CD4-positive, alpha-beta T cell (primary cell): ENCODE measurements at regions of chr10 and their contacts with region 1.

Region 1: GRCh38 chr10:102641880-102642735 is 2.2 kb upstream of the TRIM8 start:
- DNase-seq: peak; percentile 94 to 100 (median 98)
- ATAC-seq: peak; percentile 70
- H3K4me3 ChIP-seq: peak overlapping the region; percentile 75
- H3K4me3 Mint-ChIP-seq: peak overlapping the region; percentile 96
- H3K27ac ChIP-seq: peak overlapping the region; percentile 95 to 96
- H3K27ac Mint-ChIP-seq: peak overlapping the region; percentile 95
- H3K4me1 ChIP-seq: peaks cover 28% of the 10 kb centered on the region
- H3K4me1 Mint-ChIP-seq: peaks cover 31% of the 10 kb centered on the region
- H3K27me3 ChIP-seq: no peaks in the 10 kb centered on the region
- H3K27me3 Mint-ChIP-seq: no peaks in the 10 kb centered on the region
- CTCF ChIP-seq: no peak

Region 2: GRCh38 chr10:102611514-102612087 is 30.5 kb before region 1 on chr10:
- CTCF ChIA-PET with region 1: interaction called, 16 read pairs
- POLR2A ChIA-PET with region 1: interaction called, 17 read pairs
- intact Hi-C with region 1: loop called in 1 of 2 experiments (anchors 2 kb)
- DNase-seq: no peak
- ATAC-seq: no peak
- H3K4me3 ChIP-seq: no peak overlapping the region
- H3K4me3 Mint-ChIP-seq: peak overlapping the region; percentile 8
- H3K27ac ChIP-seq: peak overlapping the region; percentile 45 to 88
- H3K27ac Mint-ChIP-seq: peak overlapping the region; percentile 99
- H3K4me1 ChIP-seq: peaks cover 44% of the 10 kb centered on the region
- H3K4me1 Mint-ChIP-seq: peaks cover 35% of the 10 kb centered on the region
- H3K27me3 ChIP-seq: no peaks in the 10 kb centered on the region
- H3K27me3 Mint-ChIP-seq: no peaks in the 10 kb centered on the region
- CTCF ChIP-seq: no peak

Region 3: GRCh38 chr10:102660888-102661657 is 19.0 kb after region 1 on chr10:
- CTCF ChIA-PET with region 1: interaction called, 12 read pairs
- POLR2A ChIA-PET with region 1: interaction called, 121 read pairs
- intact Hi-C with region 1: no loop called
- DNase-seq: peak in 13 of 14 experiments; percentile 33 to 81 (median 46)
- ATAC-seq: peak; percentile 74
- H3K4me3 ChIP-seq: peak overlapping the region; percentile 45
- H3K4me3 Mint-ChIP-seq: peak overlapping the region; percentile 52
- H3K27ac ChIP-seq: peak overlapping the region; percentile 40 to 60
- H3K27ac Mint-ChIP-seq: peak overlapping the region; percentile 82
- H3K4me1 ChIP-seq: peaks cover 52% of the 10 kb centered on the region
- H3K4me1 Mint-ChIP-seq: peaks cover 40% of the 10 kb centered on the region
- H3K27me3 ChIP-seq: no peaks in the 10 kb centered on the region
- H3K27me3 Mint-ChIP-seq: no peaks in the 10 kb centered on the region
- CTCF ChIP-seq: no peak

Region 4: DNA sequence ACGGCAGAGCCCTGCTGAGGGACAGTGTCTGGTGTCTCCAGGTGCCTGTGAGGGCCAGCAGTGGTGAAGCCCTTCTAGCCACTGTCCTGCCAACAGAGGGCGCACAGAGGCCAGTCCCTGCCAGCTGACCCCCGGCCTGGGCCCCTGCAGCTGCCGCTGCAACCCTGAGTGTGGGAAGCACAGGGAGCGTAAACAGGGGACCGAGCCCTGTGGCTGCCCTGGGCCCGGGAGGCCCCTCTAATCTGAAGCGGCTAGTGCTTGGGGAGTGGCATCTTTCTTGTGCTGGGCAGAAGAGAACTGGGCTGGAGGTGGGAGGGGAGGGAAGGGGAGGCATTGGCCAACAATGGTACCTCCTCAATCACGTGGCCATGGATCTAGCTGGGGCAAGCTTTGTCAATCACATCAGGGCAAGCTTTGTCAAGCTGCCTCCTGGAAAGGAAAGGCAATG is 36.8 kb after region 1 on chr10:
- CTCF ChIA-PET with region 1: interaction called, 30 read pairs
- POLR2A ChIA-PET with region 1: interaction called, 134 read pairs
- intact Hi-C with region 1: loop called (anchors 2 kb)
- DNase-seq: peak in 3 of 14 experiments; percentile 28 to 49 (median 41)
- ATAC-seq: no peak
- H3K4me3 ChIP-seq: no peak overlapping the region
- H3K4me3 Mint-ChIP-seq: peak overlapping the region; percentile 30
- H3K27ac ChIP-seq: no peak overlapping the region
- H3K27ac Mint-ChIP-seq: peak overlapping the region; percentile 49
- H3K4me1 ChIP-seq: peaks cover 55% of the 10 kb centered on the region
- H3K4me1 Mint-ChIP-seq: peaks cover 67% of the 10 kb centered on the region
- H3K27me3 ChIP-seq: no peaks in the 10 kb centered on the region
- H3K27me3 Mint-ChIP-seq: no peaks in the 10 kb centered on the region
- CTCF ChIP-seq: no peak